SK-N-SH (cell line): ENCODE measurements at regions of chr9 and their contacts with region 1.

Region 1: DNA sequence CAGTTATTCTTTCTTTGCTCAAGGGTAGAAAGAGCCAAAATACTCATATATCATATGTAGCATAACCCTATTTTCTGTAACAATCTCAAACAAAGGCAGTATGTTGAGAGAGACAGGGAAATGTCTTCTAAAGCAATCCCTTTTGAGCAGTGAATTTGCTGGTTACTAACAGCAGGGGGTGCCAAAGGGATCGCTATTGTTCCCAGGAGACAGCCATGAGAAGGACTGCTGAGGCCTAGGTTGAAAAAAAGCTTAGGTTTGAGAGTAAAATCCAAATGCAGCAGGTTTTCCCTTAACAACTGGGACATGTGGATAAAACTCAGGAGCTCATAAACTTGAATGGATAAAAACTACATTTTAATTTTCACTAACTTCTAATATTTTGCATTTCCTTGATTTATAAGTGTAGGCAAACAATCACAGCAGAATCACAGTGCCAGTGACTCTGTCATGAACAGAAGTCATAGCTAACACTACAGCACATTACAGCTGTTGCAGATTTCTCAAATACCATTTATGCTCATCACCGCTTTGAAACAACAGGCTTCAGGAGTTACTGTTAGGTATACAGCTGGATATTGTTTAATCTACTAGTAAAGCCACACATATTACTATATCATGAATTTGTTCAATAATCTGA is 148.4 kb downstream of the MAPKAP1 start:
- DNase-seq: peak; percentile 68
- H3K4me3 ChIP-seq: no peak overlapping the region; a peak in 1 of 4 replicates
- H3K27ac ChIP-seq: peak overlapping the region; percentile 43 to 58
- H3K4me1 ChIP-seq: peaks cover 4 to 6% of the 10 kb centered on the region in 2 experiments; a peak in 3 of 4 replicates
- H3K27me3 ChIP-seq: no peaks in the 10 kb centered on the region
- CTCF ChIP-seq: peak; percentile 86
- EP300 ChIP-seq: no peak
- RAD21 ChIP-seq: peak; percentile 93

Region 2: DNA sequence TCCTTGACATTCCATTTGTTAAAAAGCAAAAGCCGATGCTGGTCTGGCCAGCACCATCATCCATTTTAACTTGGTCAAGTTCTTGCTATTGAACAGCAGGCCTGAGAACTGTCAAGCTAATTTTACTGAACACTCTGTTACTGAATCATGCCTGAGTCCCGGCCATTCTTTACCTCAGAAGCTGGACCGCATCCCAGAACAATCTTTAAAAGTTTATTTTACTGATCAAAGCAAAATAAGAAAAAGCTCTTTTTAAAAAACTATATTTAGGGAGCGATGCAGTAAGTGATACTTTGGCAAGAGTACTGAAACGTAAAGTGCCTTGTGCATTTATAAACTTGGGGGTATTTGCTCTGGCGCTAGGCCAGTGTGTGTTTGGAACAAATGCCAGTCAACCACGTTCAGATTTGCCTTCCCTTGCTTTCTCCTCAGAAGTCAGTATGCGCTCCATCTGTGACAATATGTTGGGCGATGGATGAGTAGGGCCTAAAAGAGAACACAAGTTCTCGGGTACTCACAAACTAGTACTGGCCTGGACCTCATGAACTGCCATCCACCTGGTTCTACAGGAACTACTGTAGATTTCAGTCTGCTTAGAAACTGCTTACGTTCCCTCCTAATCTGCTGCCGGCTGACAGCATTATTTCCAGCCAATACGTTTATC is 13.5 kb before region 1 on chr9:
- CTCF ChIA-PET with region 1: interaction called, 23 read pairs
- POLR2A ChIA-PET with region 1: no interaction called
- DNase-seq: no peak
- H3K4me3 ChIP-seq: no peak overlapping the region
- H3K27ac ChIP-seq: peak overlapping the region; percentile 76 to 90
- H3K4me1 ChIP-seq: peaks cover 49 to 53% of the 10 kb centered on the region in 2 experiments
- H3K27me3 ChIP-seq: no peaks in the 10 kb centered on the region
- CTCF ChIP-seq: no peak
- EP300 ChIP-seq: peak; percentile 72 to 97
- RAD21 ChIP-seq: no peak

Region 3: DNA sequence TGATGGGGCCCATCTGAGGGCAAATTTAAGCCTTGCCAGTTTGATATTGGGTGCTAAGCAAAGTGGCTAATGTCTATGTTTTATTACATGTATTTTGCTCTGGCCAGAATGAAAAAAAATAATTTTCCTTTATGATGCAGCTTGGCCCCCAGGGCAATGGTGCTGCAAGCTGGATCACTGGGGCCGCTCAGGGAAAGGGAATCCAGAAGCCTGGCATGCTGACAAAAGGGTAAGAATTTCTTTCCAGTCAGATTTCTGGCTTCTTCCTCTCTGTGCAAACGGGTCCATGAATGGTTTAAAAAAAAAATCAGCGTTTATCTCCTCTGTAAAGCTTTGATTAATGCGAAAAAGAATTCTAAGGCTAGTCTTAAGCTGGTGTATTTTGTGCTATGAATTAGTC is 10.0 kb after region 1 on chr9:
- CTCF ChIA-PET with region 1: interaction called, 28 read pairs
- POLR2A ChIA-PET with region 1: no interaction called
- DNase-seq: no peak
- H3K4me3 ChIP-seq: no peak overlapping the region
- H3K27ac ChIP-seq: no peak overlapping the region; a peak in 1 of 4 replicates
- H3K4me1 ChIP-seq: peaks cover 6 to 11% of the 10 kb centered on the region in 2 experiments; a peak in 2 of 4 replicates
- H3K27me3 ChIP-seq: no peaks in the 10 kb centered on the region
- CTCF ChIP-seq: no peak
- EP300 ChIP-seq: no peak
- RAD21 ChIP-seq: no peak

Region 4: DNA sequence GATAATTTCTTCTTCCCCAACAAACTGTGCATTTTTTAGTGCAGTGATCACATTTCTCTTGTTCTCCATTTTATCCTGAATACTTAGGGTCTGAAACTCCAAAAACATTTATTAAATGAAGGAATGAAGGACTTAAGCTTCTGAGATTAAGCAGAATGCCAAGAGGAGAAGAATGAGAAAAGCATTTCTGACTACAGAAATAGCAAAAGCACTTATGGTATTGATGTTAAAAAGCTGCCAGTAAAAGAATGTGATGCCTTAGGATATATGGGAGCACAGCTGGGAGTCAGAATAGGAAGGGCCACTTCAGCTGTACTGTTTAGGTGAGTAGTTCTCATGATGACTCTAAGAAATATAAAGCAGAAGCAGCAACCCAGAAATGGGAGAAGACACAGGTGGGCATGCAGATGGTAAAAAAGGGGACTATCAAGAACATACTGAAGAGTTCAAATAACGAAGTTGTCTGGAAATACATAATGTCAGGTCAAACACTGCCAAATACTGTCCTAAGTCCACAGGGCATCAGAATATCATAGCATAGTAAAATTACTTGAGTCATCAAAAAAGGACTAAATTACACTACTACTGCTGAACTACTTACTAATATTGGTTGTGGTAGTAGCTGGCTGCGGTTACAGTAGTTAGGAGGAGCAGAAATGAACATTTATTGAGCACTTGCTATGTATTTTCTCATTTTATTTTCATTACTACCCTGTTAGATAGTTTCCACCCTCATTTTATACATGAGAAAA is 15.7 kb after region 1 on chr9:
- CTCF ChIA-PET with region 1: interaction called, 28 read pairs
- POLR2A ChIA-PET with region 1: no interaction called
- DNase-seq: no peak
- H3K4me3 ChIP-seq: no peak overlapping the region
- H3K27ac ChIP-seq: no peak overlapping the region
- H3K4me1 ChIP-seq: no peaks in the 10 kb centered on the region
- H3K27me3 ChIP-seq: no peaks in the 10 kb centered on the region
- CTCF ChIP-seq: no peak
- EP300 ChIP-seq: no peak
- RAD21 ChIP-seq: no peak

Region 5: GRCh38 chr9:125591245-125591644 is 32.7 kb after region 1 on chr9:
- CTCF ChIA-PET with region 1: interaction called, 11 read pairs
- POLR2A ChIA-PET with region 1: interaction called, 3 read pairs
- DNase-seq: no peak
- H3K4me3 ChIP-seq: no peak overlapping the region
- H3K27ac ChIP-seq: no peak overlapping the region
- H3K4me1 ChIP-seq: peaks cover 0 to 5% of the 10 kb centered on the region in 2 experiments; a peak in 1 of 4 replicates
- H3K27me3 ChIP-seq: no peaks in the 10 kb centered on the region
- CTCF ChIP-seq: no peak
- EP300 ChIP-seq: no peak
- RAD21 ChIP-seq: no peak

Region 6: DNA sequence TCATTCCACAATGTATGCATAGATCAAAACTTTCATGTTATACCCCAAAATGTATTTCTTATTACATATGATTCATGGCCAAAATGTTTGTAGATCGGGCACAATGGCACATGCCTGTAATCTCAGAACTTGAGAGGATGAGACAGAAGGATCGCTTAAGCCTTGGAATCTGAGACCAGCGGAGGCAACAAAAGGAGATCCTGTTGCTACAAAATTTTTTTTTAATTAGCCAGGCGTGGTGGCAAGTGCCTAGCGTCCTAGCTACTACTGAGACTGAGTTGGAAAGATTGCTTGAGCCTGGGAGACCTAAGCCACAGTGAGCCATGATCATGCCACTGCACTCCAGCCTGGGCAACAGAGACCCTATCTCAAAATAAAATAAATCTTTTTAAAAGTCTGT is 58.5 kb after region 1 on chr9:
- CTCF ChIA-PET with region 1: interaction called, 12 read pairs
- POLR2A ChIA-PET with region 1: no interaction called
- DNase-seq: no peak
- H3K4me3 ChIP-seq: no peak overlapping the region
- H3K27ac ChIP-seq: no peak overlapping the region
- H3K4me1 ChIP-seq: no peaks in the 10 kb centered on the region; a peak in 1 of 4 replicates
- H3K27me3 ChIP-seq: no peaks in the 10 kb centered on the region
- CTCF ChIP-seq: no peak
- EP300 ChIP-seq: no peak
- RAD21 ChIP-seq: no peak

Region 7: GRCh38 chr9:125631391-125632085 is 73.0 kb after region 1 on chr9:
- CTCF ChIA-PET with region 1: interaction called, 12 read pairs
- POLR2A ChIA-PET with region 1: no interaction called
- DNase-seq: peak; percentile 71
- H3K4me3 ChIP-seq: no peak overlapping the region
- H3K27ac ChIP-seq: 0 out of 4 replicates have a peak overlapping the region, but pooled peaks of 1 of the 2 experiments have one; percentile 11
- H3K4me1 ChIP-seq: peaks cover 13 to 32% of the 10 kb centered on the region in 2 experiments; a peak in 3 of 4 replicates
- H3K27me3 ChIP-seq: no peaks in the 10 kb centered on the region
- CTCF ChIP-seq: peak; percentile 68
- EP300 ChIP-seq: no peak
- RAD21 ChIP-seq: peak; percentile 90

Region 8: DNA sequence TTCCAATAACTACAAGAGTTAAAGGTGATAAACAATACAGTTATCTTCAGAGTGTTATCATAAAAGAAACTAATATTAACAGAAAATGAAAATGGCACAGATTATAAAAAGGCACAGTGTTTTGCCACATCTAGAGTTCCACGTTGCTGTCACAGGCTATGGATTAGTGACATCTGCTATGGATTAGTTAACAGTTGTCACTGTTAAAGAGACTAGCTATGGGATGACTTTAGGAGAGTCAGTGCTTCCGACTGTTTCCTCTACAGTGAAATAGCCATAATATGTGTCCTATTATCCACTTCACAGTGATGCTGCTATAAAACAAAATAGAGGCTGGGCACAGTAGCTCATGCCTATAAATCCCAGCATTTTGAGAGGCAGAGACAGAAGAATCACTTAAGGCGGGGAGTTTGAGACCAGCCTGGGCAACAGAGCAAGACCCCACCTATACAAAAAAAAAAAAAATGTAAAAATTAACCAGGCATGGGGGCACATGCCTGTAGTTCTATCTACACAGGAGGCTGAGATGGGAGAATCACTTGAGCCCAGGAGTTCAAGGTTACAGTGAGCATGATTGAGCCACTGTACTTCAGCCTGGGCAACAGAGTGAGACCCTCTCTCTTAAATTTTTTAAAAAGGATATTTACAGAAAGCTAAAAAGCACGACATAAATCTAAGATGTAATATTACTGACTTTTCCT is 128.7 kb after region 1 on chr9:
- CTCF ChIA-PET with region 1: no interaction called
- POLR2A ChIA-PET with region 1: no interaction called
- DNase-seq: no peak
- H3K4me3 ChIP-seq: no peak overlapping the region
- H3K27ac ChIP-seq: no peak overlapping the region
- H3K4me1 ChIP-seq: 0 out of 4 replicates have a peak, but pooled peaks cover 0 to 6% of the 10 kb centered on the region in 2 experiments
- H3K27me3 ChIP-seq: no peaks in the 10 kb centered on the region
- CTCF ChIP-seq: no peak
- EP300 ChIP-seq: no peak
- RAD21 ChIP-seq: no peak

Region 9: GRCh38 chr9:125774106-125774505 is 215.5 kb after region 1 on chr9:
- CTCF ChIA-PET with region 1: no interaction called
- POLR2A ChIA-PET with region 1: no interaction called
- DNase-seq: no peak
- H3K4me3 ChIP-seq: no peak overlapping the region
- H3K27ac ChIP-seq: no peak overlapping the region
- H3K4me1 ChIP-seq: peaks cover 0 to 7% of the 10 kb centered on the region in 2 experiments; a peak in 2 of 4 replicates
- H3K27me3 ChIP-seq: no peaks in the 10 kb centered on the region
- CTCF ChIP-seq: no peak
- EP300 ChIP-seq: no peak
- RAD21 ChIP-seq: no peak